AG04450 (cell line): ENCODE measurements at regions of chr1 and their contacts with region 1.

Region 1: GRCh38 chr1:39949871-39950448 is 5.0 kb upstream of the MFSD2A start:
- DNase-seq: no peak
- H3K4me3 ChIP-seq: no peak overlapping the region
- H3K27ac ChIP-seq: no peak overlapping the region
- H3K27me3 ChIP-seq: peaks cover 7% of the 10 kb centered on the region
- CTCF ChIP-seq: no peak

Region 2: GRCh38 chr1:39858315-39858714 is 91.6 kb before region 1 on chr1:
- CTCF ChIA-PET with region 1: no interaction called
- POLR2A ChIA-PET with region 1: interaction called, 13 read pairs
- DNase-seq: no peak
- H3K4me3 ChIP-seq: no peak overlapping the region
- H3K27ac ChIP-seq: no peak overlapping the region
- H3K27me3 ChIP-seq: no peaks in the 10 kb centered on the region
- CTCF ChIP-seq: no peak